ENCODE measurements at regions of chr12 and their contacts with region 1.

Region 1: DNA sequence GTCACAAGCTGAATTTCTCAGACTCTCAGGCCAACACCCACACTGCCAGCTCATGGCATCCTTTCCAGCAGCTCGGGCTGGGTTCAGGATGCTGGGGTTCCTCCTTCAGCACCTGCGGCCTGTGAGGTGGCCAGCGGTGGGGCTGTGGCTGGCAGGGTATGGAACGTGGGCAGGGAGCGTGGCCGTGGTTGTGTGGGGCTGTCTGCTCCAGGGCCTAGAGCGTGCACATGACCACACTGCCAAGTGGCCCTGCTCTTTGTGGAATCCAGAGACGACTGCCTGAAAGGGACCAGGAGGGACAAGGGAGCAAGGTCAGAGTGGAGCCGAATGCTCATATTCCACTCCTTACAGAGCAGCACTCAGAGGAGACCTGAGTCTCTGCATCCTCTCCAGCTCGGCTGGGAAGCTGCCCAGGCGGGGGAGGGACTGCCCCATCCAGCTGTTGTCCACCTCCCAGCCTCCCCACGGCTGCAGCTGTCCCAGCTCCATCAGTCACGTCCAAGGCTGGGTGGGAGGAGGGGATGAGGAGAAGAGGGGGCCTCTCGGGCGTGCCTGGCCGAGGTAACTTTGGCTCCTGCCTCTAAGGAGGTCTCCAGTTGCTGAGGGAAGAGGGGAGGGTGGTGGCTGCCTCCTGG is 71.3 kb downstream of the TSPAN9 start:
- DNase-seq: no peak
- ATAC-seq: peak in 1 of 2 donors; percentile 48
- H3K4me3 ChIP-seq: no peak overlapping the region
- H3K27ac ChIP-seq: no peak overlapping the region
- H3K4me1 ChIP-seq: peaks cover 57% of the 10 kb centered on the region
- H3K27me3 ChIP-seq: no peaks in the 10 kb centered on the region
- CTCF ChIP-seq: no peak

Region 2: GRCh38 chr12:3275171-3276041 is 126.9 kb after region 1 on chr12:
- intact Hi-C with region 1: loop called (anchors 10 kb)
- DNase-seq: peak; percentile 77
- ATAC-seq: peak; percentile 73 to 74
- H3K4me3 ChIP-seq: no peak overlapping the region
- H3K27ac ChIP-seq: no peak overlapping the region
- H3K4me1 ChIP-seq: peaks cover 13% of the 10 kb centered on the region
- H3K27me3 ChIP-seq: no peaks in the 10 kb centered on the region
- CTCF ChIP-seq: peak; percentile 99

Measured in lower lobe of right lung (tissue), 2 donors.